Esophagus squamous epithelium (tissue), 5 donors: ENCODE measurements at regions of chr1 and their contacts with region 1.

Region 1: GRCh38 chr1:3900119-3900968 is at the start of gene C1orf174:
- DNase-seq: peak; percentile 99
- H3K4me3 ChIP-seq: peak within 1 kb of the TSS; percentile 82 to 100 (median 96)
- H3K27ac ChIP-seq: peak within 1 kb of the TSS; percentile 92 to 99 (median 98)
- H3K4me1 ChIP-seq: peaks cover 6 to 40% (median 6%) of the 10 kb centered on the region in 3 donors
- H3K27me3 ChIP-seq: no peaks in the 10 kb centered on the region
- CTCF ChIP-seq: peak in 1 of 6 experiments; percentile 10
- POLR2A ChIP-seq: peak in 2 of 4 donors; percentile 35 to 44
- total RNA-seq, gene C1orf174: 14.1 to 25.4 (median 23.9) TPM

Region 2: DNA sequence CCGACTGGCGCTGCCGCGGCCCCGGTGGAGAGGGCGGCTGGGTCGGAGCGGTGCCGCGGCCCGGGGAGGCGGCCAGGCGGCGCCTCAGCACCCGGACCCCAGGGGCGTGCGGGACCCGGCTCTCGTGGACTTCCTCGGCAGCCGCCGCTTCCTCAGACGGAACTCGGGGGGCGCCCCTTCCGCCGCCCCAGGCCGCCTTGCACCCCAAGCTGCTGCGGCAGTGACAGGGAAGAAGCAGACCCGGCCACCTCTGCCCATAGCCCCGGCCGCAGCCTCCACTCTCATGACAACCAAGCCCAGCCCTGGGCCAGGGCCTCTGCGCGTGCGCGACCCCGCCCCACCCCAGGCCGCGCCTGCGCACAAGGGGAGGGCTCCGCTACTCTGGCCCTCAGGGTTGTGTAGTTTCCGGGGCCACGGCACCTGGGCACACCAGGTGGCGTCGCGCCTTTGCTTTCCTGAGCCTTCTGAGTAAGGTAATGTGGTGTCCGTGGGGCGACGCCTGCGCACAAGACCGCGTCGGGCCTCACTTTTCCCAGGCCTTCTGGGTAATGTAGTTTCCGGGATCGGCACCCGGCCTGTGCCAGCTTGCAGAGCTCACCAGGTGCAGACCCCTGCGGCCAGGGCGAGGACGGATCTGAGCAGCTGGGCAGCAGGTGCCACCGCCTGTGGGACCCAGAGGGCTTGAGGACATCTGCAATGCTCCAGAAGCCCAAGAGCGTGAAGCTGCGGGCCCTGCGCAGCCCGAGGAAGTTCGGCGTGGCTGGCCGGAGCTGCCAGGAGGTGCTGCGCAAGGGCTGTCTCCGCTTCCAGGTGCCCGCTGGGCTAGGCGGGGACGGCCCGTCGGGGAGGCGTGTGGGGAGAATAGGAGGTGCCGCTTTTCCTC is 43.2 kb before region 1 on chr1 and contains the starts of genes CEP104 and DFFB:
- intact Hi-C with region 1: loop called (anchors 5 kb)
- DNase-seq: peak; percentile 86
- H3K4me3 ChIP-seq: peak within 1 kb of the TSS; percentile 72 to 100 (median 87)
- H3K27ac ChIP-seq: peak within 1 kb of the TSS; percentile 74 to 95 (median 90)
- H3K4me1 ChIP-seq: peaks cover 16 to 42% (median 21%) of the 10 kb centered on the region in 3 donors
- H3K27me3 ChIP-seq: no peaks in the 10 kb centered on the region
- CTCF ChIP-seq: peak in 4 of 6 experiments; percentile 16 to 84 (median 36)
- POLR2A ChIP-seq: peak in 3 of 4 donors; percentile 30 to 76 (median 61)
- total RNA-seq, gene CEP104: 18.7 to 24.4 (median 19.8) TPM
- total RNA-seq, gene DFFB: 1.6 to 8.2 (median 3.2) TPM

Region 3: GRCh38 chr1:3968851-3969250 is 68.5 kb after region 1 on chr1:
- intact Hi-C with region 1: no loop called
- DNase-seq: no peak
- H3K4me3 ChIP-seq: no peak overlapping the region
- H3K27ac ChIP-seq: no peak overlapping the region
- H3K4me1 ChIP-seq: no peaks in the 10 kb centered on the region
- H3K27me3 ChIP-seq: peaks cover 0 to 72% (median 0%) of the 10 kb centered on the region in 4 donors
- CTCF ChIP-seq: no peak
- POLR2A ChIP-seq: no peak